T-cell (primary cell): ENCODE measurements at regions of chr14 and their contacts with region 1.

Region 1: GRCh38 chr14:97912217-97912616 is 1115.0 kb downstream of the VRK1 start:
- DNase-seq: no peak
- ATAC-seq: no peak
- H3K4me3 ChIP-seq: no peak overlapping the region
- H3K4me3 Mint-ChIP-seq: no peak overlapping the region
- H3K27ac ChIP-seq: no peak overlapping the region
- H3K27ac Mint-ChIP-seq: no peak overlapping the region
- H3K4me1 ChIP-seq: peaks cover 3 to 6% of the 10 kb centered on the region in 2 experiments
- H3K4me1 Mint-ChIP-seq: peaks cover 9 to 10% (median 9%) of the 10 kb centered on the region in 3 donors
- H3K27me3 ChIP-seq: no peaks in the 10 kb centered on the region
- H3K27me3 Mint-ChIP-seq: peaks cover 2 to 4% of the 10 kb centered on the region in 2 donors

Region 2: GRCh38 chr14:98656418-98656817 is 744.2 kb after region 1 on chr14:
- CTCF ChIA-PET with region 1: no interaction called
- POLR2A ChIA-PET with region 1: interaction called in 1 of 2 experiments, 10 read pairs
- DNase-seq: no peak
- ATAC-seq: no peak
- H3K4me3 ChIP-seq: no peak overlapping the region
- H3K4me3 Mint-ChIP-seq: no peak overlapping the region
- H3K27ac ChIP-seq: no peak overlapping the region
- H3K27ac Mint-ChIP-seq: no peak overlapping the region
- H3K4me1 ChIP-seq: no peaks in the 10 kb centered on the region
- H3K4me1 Mint-ChIP-seq: no peaks in the 10 kb centered on the region
- H3K27me3 ChIP-seq: no peaks in the 10 kb centered on the region
- H3K27me3 Mint-ChIP-seq: no peaks in the 10 kb centered on the region